PC-9 (cell line): ENCODE measurements at regions of chr4 and their contacts with region 1.

Region 1: DNA sequence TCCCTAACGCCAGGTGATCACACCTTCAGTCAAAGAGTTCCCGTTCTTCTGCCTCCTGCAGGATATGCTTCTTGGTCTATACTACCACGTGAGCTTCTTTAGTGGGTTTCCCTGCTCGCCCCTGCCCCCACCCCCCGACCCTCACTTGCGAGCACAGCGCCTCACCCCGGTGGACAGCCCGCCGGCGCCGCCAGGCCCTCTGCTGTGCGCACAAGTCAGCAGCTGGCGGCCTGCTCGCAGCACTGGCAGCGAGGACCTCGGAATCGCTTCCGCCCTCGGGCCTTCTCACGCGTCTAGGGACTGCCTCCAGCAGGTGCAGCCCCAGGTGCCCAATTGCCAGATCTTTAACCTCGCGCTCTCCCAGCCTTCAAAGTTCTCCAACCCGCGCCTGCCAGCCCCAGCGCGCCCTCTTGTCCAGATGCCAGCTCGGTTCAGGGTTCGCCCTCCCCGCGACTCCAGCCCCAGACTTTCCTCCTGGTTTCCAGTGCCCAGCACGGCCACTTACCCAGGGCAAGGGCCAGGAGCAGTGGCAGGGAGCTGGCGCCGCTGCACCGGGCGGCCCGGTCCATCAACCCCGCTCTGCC is 474 bp downstream of the BTC start:
- DNase-seq: peak; percentile 56 to 66
- H3K4me3 ChIP-seq: peak overlapping the region; percentile 91
- H3K27ac ChIP-seq: peak overlapping the region; percentile 79
- H3K4me1 ChIP-seq: peaks cover 11% of the 10 kb centered on the region
- H3K27me3 ChIP-seq: no peaks in the 10 kb centered on the region
- CTCF ChIP-seq: no peak; the same call in 1 of the 2 replicates

Region 2: GRCh38 chr4:74370912-74371311 is 422.9 kb before region 1 on chr4:
- CTCF ChIA-PET with region 1: no interaction called
- POLR2A ChIA-PET with region 1: no interaction called
- intact Hi-C with region 1: loop called (anchors 10 kb)
- DNase-seq: peak in 1 of 2 experiments; percentile 41
- H3K4me3 ChIP-seq: no peak overlapping the region
- H3K27ac ChIP-seq: 0 out of 2 replicates have a peak overlapping the region, but pooled peaks have one; percentile 19
- H3K4me1 ChIP-seq: peaks cover 44% of the 10 kb centered on the region
- H3K27me3 ChIP-seq: no peaks in the 10 kb centered on the region
- CTCF ChIP-seq: peak; percentile 59

Region 3: GRCh38 chr4:74516321-74516720 is 277.5 kb before region 1 on chr4:
- CTCF ChIA-PET with region 1: no interaction called
- POLR2A ChIA-PET with region 1: no interaction called
- intact Hi-C with region 1: no loop called
- DNase-seq: peak in 1 of 2 experiments; percentile 55
- H3K4me3 ChIP-seq: no peak overlapping the region
- H3K27ac ChIP-seq: no peak overlapping the region
- H3K4me1 ChIP-seq: peaks cover 9% of the 10 kb centered on the region
- H3K27me3 ChIP-seq: no peaks in the 10 kb centered on the region
- CTCF ChIP-seq: no peak

Region 4: DNA sequence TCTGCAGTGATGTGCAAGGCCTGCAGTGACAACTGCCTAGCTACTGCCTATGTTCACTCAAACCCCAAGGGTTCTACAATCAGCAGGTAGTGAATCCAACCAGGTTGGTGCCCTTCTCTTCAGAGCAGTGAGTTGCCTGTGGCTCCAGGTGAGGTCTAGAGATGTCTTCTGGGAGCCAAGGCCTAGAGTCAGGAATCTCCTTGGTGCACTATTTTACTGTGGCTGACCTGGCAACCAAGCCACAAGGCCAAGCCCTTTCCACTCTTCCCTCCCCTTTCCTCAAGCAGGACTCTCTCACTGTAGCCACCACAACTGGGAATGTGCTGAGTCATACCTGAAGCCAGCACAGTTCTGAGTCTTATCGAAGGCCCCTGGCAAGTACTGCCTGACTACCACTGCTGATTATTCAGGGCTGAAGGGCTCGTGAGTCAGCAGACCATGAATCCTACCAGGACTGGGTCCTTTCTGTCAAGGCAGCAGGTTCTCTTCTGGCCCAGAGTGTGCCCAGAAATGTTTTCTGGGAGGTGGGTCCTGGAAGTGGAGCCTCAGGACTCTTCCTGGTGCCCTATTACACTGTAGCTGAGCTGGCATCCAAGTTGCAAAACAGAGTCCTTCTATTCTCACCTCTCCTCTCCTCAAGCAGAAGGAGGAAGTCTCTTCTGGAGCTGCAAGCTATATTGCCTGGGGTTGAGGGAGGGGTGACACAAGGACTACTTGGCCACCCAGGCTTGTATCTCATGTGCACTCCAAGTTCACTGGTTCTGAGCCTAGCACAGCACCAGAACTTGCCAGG is 111.1 kb before region 1 on chr4:
- CTCF ChIA-PET with region 1: interaction called, 12 read pairs
- POLR2A ChIA-PET with region 1: no interaction called
- intact Hi-C with region 1: loop called (anchors 2 kb)
- DNase-seq: peak; percentile 74 to 90
- H3K4me3 ChIP-seq: no peak overlapping the region
- H3K27ac ChIP-seq: peak overlapping the region; percentile 78
- H3K4me1 ChIP-seq: peaks cover 22% of the 10 kb centered on the region
- H3K27me3 ChIP-seq: no peaks in the 10 kb centered on the region
- CTCF ChIP-seq: no peak